Activated CD4-positive, alpha-beta T cell treated with anti-CD3 and anti-CD28 coated beads for 36 hours (primary cell): ENCODE measurements at regions of chr18 and their contacts with region 1.

Region 1: GRCh38 chr18:51051105-51051712 is 21.2 kb downstream of the SMAD4 start:
- DNase-seq: no peak
- ATAC-seq: peak; percentile 89
- H3K4me3 Mint-ChIP-seq: no peak overlapping the region
- H3K27ac Mint-ChIP-seq: peak overlapping the region; percentile 42
- H3K4me1 Mint-ChIP-seq: peaks cover 34% of the 10 kb centered on the region
- H3K27me3 Mint-ChIP-seq: no peaks in the 10 kb centered on the region

Region 2: GRCh38 chr18:50819728-50820378 is 231.4 kb before region 1 on chr18 and contains the start of gene MRO:
- CTCF ChIA-PET with region 1: interaction called, 25 read pairs
- POLR2A ChIA-PET with region 1: no interaction called
- intact Hi-C with region 1: loop called (anchors 1 kb)
- DNase-seq: peak; percentile 88
- ATAC-seq: peak; percentile 100
- H3K4me3 Mint-ChIP-seq: no peak within 1 kb of the TSS
- H3K27ac Mint-ChIP-seq: no peak within 1 kb of the TSS
- H3K4me1 Mint-ChIP-seq: no peaks in the 10 kb centered on the region
- H3K27me3 Mint-ChIP-seq: peaks cover 14% of the 10 kb centered on the region
- total RNA-seq, gene MRO: not detected

Region 3: GRCh38 chr18:50933684-50934083 is 117.5 kb before region 1 on chr18:
- CTCF ChIA-PET with region 1: no interaction called
- POLR2A ChIA-PET with region 1: no interaction called
- intact Hi-C with region 1: no loop called
- DNase-seq: no peak
- ATAC-seq: no peak
- H3K4me3 Mint-ChIP-seq: no peak overlapping the region
- H3K27ac Mint-ChIP-seq: no peak overlapping the region
- H3K4me1 Mint-ChIP-seq: no peaks in the 10 kb centered on the region
- H3K27me3 Mint-ChIP-seq: no peaks in the 10 kb centered on the region

Region 4: DNA sequence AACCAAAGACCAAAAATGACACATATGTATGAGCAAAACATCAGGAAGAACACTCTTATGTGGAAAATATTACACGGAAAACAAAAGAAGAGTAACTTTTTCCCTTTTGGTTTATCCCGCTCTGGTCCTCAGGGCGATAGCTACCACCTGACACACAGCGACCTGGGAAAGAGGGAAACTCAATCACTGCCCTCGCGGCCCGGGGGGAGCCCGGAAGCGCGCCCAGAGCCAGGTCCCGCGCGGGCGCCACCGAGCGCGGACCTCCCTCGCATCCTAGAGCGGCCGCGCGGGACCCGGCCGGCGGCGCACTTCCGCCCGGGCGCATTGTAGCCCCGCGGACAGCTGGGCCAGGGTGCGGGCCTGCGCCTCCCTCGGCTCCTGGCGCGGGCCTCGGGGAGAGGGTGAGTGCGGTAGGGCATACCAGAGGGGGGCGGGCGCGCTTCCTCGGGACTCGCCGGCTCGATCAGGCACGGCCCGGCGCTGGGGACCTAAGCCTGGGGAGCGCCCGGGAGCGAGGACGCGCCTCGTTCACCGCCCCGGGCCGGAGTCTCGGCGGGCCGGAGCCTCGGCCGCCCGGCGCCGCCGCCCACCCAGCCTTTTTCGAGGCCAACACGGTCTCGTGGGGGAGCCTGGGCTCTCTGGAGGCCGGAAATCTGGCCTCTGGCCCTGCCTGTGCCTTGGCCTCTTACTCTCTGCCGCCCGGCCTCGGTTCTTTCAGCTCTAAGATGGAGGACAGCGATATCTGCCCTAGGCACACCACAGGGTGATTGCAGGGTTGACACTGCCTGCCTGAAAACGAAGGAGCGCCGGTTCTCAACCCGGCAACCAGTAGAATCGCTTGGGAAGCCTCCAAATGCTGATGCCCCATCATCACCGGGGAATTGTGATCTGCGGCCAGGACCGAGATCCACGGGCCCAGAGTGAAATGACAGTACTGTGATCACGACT is 83.2 kb before region 1 on chr18 and contains the start of gene ELAC1:
- CTCF ChIA-PET with region 1: no interaction called
- POLR2A ChIA-PET with region 1: no interaction called
- intact Hi-C with region 1: loop called (anchors 5 kb)
- DNase-seq: peak; percentile 76
- ATAC-seq: peak; percentile 91
- H3K4me3 Mint-ChIP-seq: peak within 1 kb of the TSS; percentile 76
- H3K27ac Mint-ChIP-seq: peak within 1 kb of the TSS; percentile 94
- H3K4me1 Mint-ChIP-seq: peaks cover 30% of the 10 kb centered on the region
- H3K27me3 Mint-ChIP-seq: no peaks in the 10 kb centered on the region
- total RNA-seq, gene ELAC1: 4.7 to 5.6 TPM

Region 5: GRCh38 chr18:50973367-50974126 is 77.7 kb before region 1 on chr18:
- CTCF ChIA-PET with region 1: no interaction called
- POLR2A ChIA-PET with region 1: no interaction called
- intact Hi-C with region 1: loop called (anchors 5 kb)
- DNase-seq: peak; percentile 30
- ATAC-seq: peak; percentile 95
- H3K4me3 Mint-ChIP-seq: no peak overlapping the region
- H3K27ac Mint-ChIP-seq: peak overlapping the region; percentile 65
- H3K4me1 Mint-ChIP-seq: peaks cover 36% of the 10 kb centered on the region
- H3K27me3 Mint-ChIP-seq: no peaks in the 10 kb centered on the region

Region 6: DNA sequence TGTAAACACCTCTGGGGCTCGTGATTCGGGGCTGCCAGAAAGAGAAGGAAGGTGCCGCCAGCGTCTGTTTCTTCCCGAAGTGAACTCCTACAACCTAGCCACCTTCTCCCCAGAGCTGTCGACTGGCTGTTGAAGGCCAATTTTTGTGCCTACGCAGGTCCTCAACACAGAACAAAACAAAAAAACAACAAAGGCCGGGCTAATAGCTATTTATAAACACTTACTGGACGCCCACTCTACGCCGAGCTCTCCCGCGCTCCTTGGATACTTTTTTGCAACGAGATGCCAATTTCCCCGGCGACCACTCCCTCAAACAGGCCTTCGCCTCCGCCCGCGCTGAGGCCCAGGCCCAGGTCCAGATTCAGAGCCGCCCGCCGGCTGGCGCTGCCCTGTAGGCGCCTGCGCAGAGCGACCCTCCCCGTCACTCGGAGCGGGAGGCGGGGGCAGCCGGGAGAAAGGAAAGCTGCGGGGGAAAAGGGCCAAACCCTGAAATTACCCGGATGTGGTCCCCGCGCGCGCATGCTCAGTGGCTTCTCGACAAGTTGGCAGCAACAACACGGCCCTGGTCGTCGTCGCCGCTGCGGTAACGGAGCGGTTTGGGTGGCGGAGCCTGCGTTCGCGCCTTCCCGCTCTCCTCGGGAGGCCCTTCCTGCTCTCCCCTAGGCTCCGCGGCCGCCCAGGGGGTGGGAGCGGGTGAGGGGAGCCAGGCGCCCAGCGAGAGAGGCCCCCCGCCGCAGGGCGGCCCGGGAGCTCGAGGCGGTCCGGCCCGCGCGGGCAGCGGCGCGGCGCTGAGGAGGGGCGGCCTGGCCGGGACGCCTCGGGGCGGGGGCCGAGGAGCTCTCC is 21.3 kb before region 1 on chr18 and contains the start of gene SMAD4:
- CTCF ChIA-PET with region 1: interaction called, 11 read pairs
- POLR2A ChIA-PET with region 1: interaction called, 3 read pairs
- intact Hi-C with region 1: loop called in 1 of 2 experiments (anchors 1 kb)
- DNase-seq: peak; percentile 99
- ATAC-seq: peak; percentile 84
- H3K4me3 Mint-ChIP-seq: peak within 1 kb of the TSS; percentile 85
- H3K27ac Mint-ChIP-seq: peak within 1 kb of the TSS; percentile 94
- H3K4me1 Mint-ChIP-seq: peaks cover 55% of the 10 kb centered on the region
- H3K27me3 Mint-ChIP-seq: no peaks in the 10 kb centered on the region
- total RNA-seq, gene SMAD4: 79.3 to 89.5 TPM

Region 7: DNA sequence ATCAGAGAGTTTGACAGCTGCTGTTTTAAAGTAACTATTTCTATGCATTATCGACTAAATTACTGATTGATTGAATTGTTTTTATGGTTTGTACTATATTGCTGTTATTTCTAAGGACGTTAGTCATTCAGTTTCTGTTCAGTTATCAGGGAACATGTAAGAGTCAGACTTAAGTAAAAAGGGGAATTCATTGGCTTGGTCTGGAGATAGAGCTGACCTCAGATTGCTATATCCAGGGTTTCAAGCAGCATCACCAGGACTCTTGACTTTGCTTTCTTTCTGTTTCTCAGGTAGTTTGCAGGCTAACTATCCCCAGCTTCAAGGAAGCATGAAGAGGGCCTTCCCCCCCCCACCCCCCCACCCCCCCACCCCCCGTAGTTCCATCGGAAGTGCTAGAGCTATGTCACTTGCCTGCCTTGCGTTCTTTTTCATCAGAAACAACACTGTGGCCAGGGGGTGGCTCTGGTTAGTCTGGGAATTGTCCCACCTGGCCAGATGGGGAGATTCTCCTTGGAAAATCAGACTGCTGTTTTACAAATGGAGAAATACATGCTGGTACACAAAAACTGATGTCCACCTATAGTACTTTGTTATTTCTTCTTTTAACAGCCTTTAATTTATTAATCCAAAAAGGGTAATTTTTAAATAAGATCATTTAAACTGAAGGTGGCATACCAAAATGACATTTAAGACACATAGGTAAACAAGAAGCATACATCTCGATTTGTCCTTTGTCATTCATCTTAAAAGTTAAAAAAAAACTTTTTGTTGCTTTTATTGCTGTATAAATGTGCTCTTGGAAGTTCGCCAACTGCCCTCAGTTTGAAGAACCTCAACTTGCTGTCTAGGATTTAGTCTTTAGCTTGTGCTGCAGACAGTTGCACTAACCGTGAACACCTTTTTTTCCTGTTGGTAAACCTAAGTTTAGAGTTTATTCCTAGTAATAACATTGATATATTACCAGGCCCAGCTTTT is 11.8 kb before region 1 on chr18:
- CTCF ChIA-PET with region 1: interaction called, 40 read pairs
- POLR2A ChIA-PET with region 1: no interaction called
- intact Hi-C with region 1: no loop called
- DNase-seq: no peak
- ATAC-seq: peak; percentile 81
- H3K4me3 Mint-ChIP-seq: no peak overlapping the region
- H3K27ac Mint-ChIP-seq: peak overlapping the region; percentile 51
- H3K4me1 Mint-ChIP-seq: peaks cover 90% of the 10 kb centered on the region
- H3K27me3 Mint-ChIP-seq: no peaks in the 10 kb centered on the region